ENCODE measurements at regions of chr1 and their contacts with region 1.

Region 1: DNA sequence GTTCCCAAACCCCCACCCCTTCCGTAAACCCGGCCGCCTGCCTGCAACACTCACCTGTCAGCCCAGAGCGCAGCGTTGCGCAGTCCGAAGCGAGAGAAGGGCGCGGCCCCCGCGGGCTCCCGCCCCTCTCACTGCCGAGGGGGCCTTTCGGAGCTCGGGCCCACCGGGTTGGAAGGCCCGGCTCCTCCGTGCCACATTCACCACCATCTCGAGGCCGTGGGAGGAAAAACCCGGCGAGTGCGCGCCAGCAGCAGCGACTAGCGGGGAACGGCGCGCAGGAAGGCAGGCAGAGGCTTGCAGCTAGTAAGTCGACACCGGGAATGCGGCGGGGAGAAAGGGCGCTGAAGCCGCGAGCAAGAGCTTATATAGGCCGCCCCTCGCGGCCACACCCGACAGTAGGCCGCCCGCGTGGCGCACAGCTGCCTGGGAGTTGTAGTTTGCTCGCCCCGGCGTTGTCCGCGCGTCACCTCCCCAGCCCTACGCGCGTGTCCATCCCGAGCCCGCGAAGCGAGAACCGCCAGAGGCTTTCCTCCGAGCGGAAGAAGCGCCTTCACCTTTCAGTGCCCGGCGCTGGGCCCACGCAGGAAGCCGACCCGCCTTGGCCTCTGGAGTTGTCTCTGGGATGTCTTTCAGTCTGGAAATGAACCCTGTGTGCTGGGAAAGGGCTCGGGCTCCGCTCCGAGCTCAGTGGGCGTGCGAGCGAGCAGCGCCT is 10.4 kb upstream of the RAB42 start:
- DNase-seq: peak; percentile 87 to 96 (median 91)
- ATAC-seq: peak; percentile 82
- H3K4me3 ChIP-seq: peak overlapping the region; percentile 88 to 91
- H3K4me3 Mint-ChIP-seq: peak overlapping the region; percentile 99
- H3K27ac ChIP-seq: peak overlapping the region; percentile 83 to 88
- H3K27ac Mint-ChIP-seq: peak overlapping the region; percentile 97
- H3K4me1 ChIP-seq: peaks cover 24% of the 10 kb centered on the region
- H3K4me1 Mint-ChIP-seq: peaks cover 37% of the 10 kb centered on the region
- H3K27me3 ChIP-seq: no peaks in the 10 kb centered on the region
- H3K27me3 Mint-ChIP-seq: no peaks in the 10 kb centered on the region
- CTCF ChIP-seq: no peak

Region 2: GRCh38 chr1:28329395-28330153 is 252.1 kb before region 1 on chr1:
- CTCF ChIA-PET with region 1: no interaction called
- POLR2A ChIA-PET with region 1: interaction called, 26 read pairs
- intact Hi-C with region 1: no loop called
- DNase-seq: peak in 6 of 9 experiments; percentile 18 to 72 (median 46)
- ATAC-seq: peak; percentile 20
- H3K4me3 ChIP-seq: peak overlapping the region; percentile 53 to 57
- H3K4me3 Mint-ChIP-seq: peak overlapping the region; percentile 95
- H3K27ac ChIP-seq: peak overlapping the region; percentile 84 to 86
- H3K27ac Mint-ChIP-seq: peak overlapping the region; percentile 98
- H3K4me1 ChIP-seq: peaks cover 20% of the 10 kb centered on the region
- H3K4me1 Mint-ChIP-seq: peaks cover 34% of the 10 kb centered on the region
- H3K27me3 ChIP-seq: no peaks in the 10 kb centered on the region
- H3K27me3 Mint-ChIP-seq: no peaks in the 10 kb centered on the region
- CTCF ChIP-seq: no peak

Region 3: DNA sequence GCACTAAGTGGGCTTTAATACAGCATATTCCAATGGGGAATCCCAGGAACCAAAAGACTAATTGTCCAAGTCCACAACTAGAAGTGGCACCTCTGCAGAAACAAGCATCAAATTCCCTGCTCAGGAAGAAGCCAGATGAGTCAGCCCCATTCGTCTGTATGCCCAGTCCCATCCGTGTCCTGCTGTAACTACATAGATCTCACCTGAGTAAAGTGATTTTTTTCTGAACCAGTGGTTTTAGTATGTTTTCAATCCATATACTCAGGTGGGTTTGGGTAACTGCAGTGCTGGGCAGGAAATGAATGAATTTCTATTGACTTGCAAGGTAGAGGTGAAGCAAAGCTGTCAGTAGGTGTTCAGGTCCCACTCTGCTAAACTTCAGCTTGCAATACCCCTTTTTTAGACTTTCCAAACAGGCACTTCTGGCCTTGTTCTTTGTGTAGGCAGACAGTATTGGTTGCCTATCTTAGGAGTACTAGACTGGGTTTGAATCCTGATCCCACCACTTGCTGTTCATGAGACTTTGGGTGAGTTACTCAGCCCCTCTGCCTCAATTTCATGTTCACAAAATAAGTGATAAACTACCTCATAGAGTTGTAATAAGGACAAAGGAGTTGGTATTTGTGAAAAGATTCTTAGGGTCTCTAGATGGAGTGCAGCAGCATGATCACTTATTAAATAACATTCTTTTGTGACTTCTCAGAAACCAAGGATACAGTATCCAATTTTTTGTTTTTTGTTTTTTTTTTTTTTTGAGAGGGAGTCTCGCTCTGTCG is 70.8 kb before region 1 on chr1:
- CTCF ChIA-PET with region 1: interaction called, 12 read pairs
- POLR2A ChIA-PET with region 1: interaction called, 38 read pairs
- intact Hi-C with region 1: no loop called
- DNase-seq: peak in 2 of 9 experiments; percentile 25 to 49
- ATAC-seq: no peak
- H3K4me3 ChIP-seq: peak overlapping the region in 1 of 2 experiments; percentile 16
- H3K4me3 Mint-ChIP-seq: peak overlapping the region; percentile 95
- H3K27ac ChIP-seq: peak overlapping the region in 1 of 2 experiments; percentile 64
- H3K27ac Mint-ChIP-seq: peak overlapping the region; percentile 91
- H3K4me1 ChIP-seq: peaks cover 53% of the 10 kb centered on the region
- H3K4me1 Mint-ChIP-seq: peaks cover 59% of the 10 kb centered on the region
- H3K27me3 ChIP-seq: no peaks in the 10 kb centered on the region
- H3K27me3 Mint-ChIP-seq: no peaks in the 10 kb centered on the region
- CTCF ChIP-seq: no peak

Region 4: GRCh38 chr1:28560886-28561285 is 20.8 kb before region 1 on chr1:
- CTCF ChIA-PET with region 1: interaction called, 6 read pairs
- POLR2A ChIA-PET with region 1: interaction called, 14 read pairs
- intact Hi-C with region 1: no loop called
- DNase-seq: no peak
- ATAC-seq: no peak
- H3K4me3 ChIP-seq: no peak overlapping the region
- H3K4me3 Mint-ChIP-seq: no peak overlapping the region
- H3K27ac ChIP-seq: no peak overlapping the region
- H3K27ac Mint-ChIP-seq: no peak overlapping the region
- H3K4me1 ChIP-seq: no peaks in the 10 kb centered on the region
- H3K4me1 Mint-ChIP-seq: no peaks in the 10 kb centered on the region
- H3K27me3 ChIP-seq: no peaks in the 10 kb centered on the region
- H3K27me3 Mint-ChIP-seq: no peaks in the 10 kb centered on the region
- CTCF ChIP-seq: no peak

Region 5: DNA sequence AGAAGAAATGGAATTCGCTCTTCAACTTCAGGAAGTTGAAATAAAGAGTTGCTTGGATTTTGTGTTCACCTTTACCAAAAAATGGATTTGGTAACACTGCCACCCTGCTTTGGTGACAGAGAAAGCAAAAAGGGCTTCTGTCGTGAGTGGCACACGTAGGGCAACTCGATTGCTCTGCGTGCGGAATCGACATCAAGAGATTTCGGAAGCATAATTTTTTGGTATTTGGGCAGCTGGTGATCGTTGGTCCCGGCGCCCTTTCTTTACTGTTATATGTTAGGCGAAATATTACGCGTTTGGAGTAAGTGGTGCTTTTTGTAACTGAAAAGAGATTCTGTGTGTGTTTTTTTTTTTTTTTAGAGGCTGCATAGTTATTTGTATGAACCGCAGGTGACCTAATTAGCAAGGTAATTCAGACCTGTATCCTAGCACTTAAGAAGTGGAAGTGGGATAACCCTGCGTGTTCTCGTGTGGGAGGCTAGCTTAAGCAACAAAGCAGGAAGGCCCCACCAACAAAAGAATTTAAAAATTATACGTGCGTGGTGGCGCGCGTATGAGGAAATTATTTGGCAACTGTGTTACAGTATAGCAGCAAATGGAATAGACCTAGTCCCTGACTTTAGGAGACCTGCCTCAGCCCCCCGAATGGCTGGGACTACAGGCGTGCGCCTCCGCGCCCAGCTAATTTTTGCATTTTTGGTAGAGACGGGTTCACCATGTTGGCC is 66.9 kb after region 1 on chr1 and contains the start of gene RNU11:
- CTCF ChIA-PET with region 1: interaction called, 11 read pairs
- POLR2A ChIA-PET with region 1: interaction called, 33 read pairs
- intact Hi-C with region 1: loop called (anchors 1 kb)
- DNase-seq: peak; percentile 76 to 97 (median 87)
- ATAC-seq: peak; percentile 65
- H3K4me3 ChIP-seq: peak within 1 kb of the TSS; percentile 41 to 65
- H3K4me3 Mint-ChIP-seq: peak within 1 kb of the TSS; percentile 80
- H3K27ac ChIP-seq: peak within 1 kb of the TSS; percentile 96 to 98
- H3K27ac Mint-ChIP-seq: peak within 1 kb of the TSS; percentile 99
- H3K4me1 ChIP-seq: peaks cover 30% of the 10 kb centered on the region
- H3K4me1 Mint-ChIP-seq: peaks cover 32% of the 10 kb centered on the region
- H3K27me3 ChIP-seq: no peaks in the 10 kb centered on the region
- H3K27me3 Mint-ChIP-seq: no peaks in the 10 kb centered on the region
- CTCF ChIP-seq: no peak
- total RNA-seq, gene RNU11: not detected

Region 6: DNA sequence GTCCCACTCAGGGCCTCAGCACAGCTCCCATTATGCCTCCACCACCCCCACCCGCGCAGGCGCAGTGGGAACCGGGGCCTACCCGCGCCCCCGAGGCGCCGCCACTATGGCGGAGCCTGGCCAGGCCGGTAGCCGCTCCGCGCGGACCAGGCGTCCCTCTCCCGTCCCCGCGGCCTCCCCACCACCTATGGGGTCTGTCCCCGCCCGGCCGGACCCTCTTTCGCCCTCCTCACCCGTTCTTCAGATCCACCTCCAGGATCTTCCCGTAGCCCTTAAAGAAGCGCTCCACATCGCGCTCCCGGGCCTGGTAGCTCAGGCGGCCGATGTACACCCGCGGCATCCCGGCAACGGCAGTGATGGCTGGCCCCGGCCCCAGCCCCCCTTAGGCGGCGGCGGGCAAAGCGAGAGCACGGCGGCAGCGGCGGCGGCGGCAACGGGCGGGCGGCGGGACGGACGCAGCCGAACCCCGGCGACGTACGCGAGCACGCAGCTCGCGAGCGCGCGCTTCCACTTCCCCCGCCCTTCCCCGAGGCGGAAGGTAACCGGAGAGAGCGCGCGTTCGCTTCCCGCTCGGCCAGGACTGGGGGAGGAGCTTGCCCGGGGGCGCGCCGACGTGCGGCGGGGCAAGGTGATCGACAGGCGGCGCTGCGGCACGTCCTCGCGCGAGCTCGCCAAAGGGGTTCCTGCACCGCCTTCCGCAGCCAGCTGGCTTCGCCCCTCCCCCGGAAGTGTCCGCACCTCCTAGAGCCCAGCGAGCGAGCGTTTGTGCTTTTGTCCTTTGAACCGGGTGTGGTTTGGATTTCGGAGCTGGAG is 599.9 kb after region 1 on chr1 and contains the start of gene SRSF4:
- CTCF ChIA-PET with region 1: no interaction called
- POLR2A ChIA-PET with region 1: interaction called, 16 read pairs
- intact Hi-C with region 1: no loop called
- DNase-seq: peak; percentile 98 to 99 (median 99)
- ATAC-seq: peak; percentile 92
- H3K4me3 ChIP-seq: peak within 1 kb of the TSS; percentile 89 to 98
- H3K4me3 Mint-ChIP-seq: peak within 1 kb of the TSS; percentile 94
- H3K27ac ChIP-seq: peak within 1 kb of the TSS; percentile 94 to 100
- H3K27ac Mint-ChIP-seq: peak within 1 kb of the TSS; percentile 94
- H3K4me1 ChIP-seq: peaks cover 37% of the 10 kb centered on the region
- H3K4me1 Mint-ChIP-seq: peaks cover 48% of the 10 kb centered on the region
- H3K27me3 ChIP-seq: no peaks in the 10 kb centered on the region
- H3K27me3 Mint-ChIP-seq: no peaks in the 10 kb centered on the region
- CTCF ChIP-seq: peak; percentile 68
- total RNA-seq, gene SRSF4: 83.6 to 92.2 TPM